ENCODE measurements at regions of chr1 and their contacts with region 1.

Region 1: DNA sequence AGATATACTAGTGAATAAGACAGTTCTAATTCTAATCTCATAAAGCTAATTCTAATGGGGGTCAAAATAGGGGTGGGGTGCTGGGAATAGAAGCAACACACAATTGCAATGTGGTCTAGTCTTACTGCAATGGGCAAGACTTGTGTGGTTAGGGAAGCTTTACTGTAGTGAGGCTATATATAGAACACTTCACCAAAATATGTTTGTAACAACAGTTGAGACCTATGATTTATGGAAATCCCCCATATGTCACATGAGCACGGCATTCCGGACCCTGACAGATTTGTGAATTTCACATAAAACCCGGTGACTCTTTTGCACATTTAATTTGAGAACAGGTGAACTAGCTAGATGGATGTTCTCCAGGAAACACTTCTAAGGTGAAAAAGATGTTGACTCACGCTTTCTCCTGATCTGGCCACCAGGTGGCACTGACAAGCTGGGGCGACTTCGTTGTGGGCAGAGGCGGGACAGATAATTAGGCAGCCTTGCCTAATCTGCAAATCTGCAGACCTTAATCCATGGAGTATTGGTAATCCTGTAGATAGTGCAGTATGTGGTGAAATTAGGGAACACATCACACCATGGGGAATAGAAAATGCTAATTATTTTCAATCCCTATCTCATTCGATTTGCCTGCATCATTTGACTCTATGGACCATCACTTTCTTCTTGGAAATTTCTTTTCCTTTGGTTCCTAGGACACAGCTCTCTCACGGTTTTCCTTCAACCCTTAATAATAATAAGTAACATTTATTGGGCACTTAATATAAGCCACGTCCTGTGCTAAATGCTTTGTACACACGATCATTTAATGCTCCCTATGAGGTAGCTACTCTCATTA is 37.7 kb downstream of the KIAA0040 start:
- DNase-seq: peak; percentile 81
- ATAC-seq: peak; percentile 64
- H3K4me3 ChIP-seq: no peak overlapping the region
- H3K4me3 Mint-ChIP-seq: no peak overlapping the region
- H3K27ac ChIP-seq: no peak overlapping the region
- H3K27ac Mint-ChIP-seq: no peak overlapping the region
- H3K4me1 ChIP-seq: peaks cover 16 to 27% of the 10 kb centered on the region in 2 donors
- H3K4me1 Mint-ChIP-seq: peaks cover 34% of the 10 kb centered on the region
- H3K27me3 ChIP-seq: peaks cover 0 to 16% (median 7%) of the 10 kb centered on the region in 4 experiments
- H3K27me3 Mint-ChIP-seq: peaks cover 18% of the 10 kb centered on the region
- CTCF ChIP-seq: peak; percentile 92

Region 2: GRCh38 chr1:174497478-174497877 is 657.4 kb before region 1 on chr1:
- CTCF ChIA-PET with region 1: no interaction called
- POLR2A ChIA-PET with region 1: no interaction called
- intact Hi-C with region 1: no loop called
- DNase-seq: no peak
- ATAC-seq: no peak
- H3K4me3 ChIP-seq: no peak overlapping the region
- H3K4me3 Mint-ChIP-seq: no peak overlapping the region
- H3K27ac ChIP-seq: no peak overlapping the region
- H3K27ac Mint-ChIP-seq: no peak overlapping the region
- H3K4me1 ChIP-seq: no peaks in the 10 kb centered on the region
- H3K4me1 Mint-ChIP-seq: peaks cover 14% of the 10 kb centered on the region
- H3K27me3 ChIP-seq: no peaks in the 10 kb centered on the region
- H3K27me3 Mint-ChIP-seq: no peaks in the 10 kb centered on the region
- CTCF ChIP-seq: no peak

Region 3: GRCh38 chr1:174850726-174851125 is 304.1 kb before region 1 on chr1:
- CTCF ChIA-PET with region 1: no interaction called
- POLR2A ChIA-PET with region 1: no interaction called
- intact Hi-C with region 1: no loop called
- DNase-seq: no peak
- ATAC-seq: no peak
- H3K4me3 ChIP-seq: no peak overlapping the region
- H3K4me3 Mint-ChIP-seq: no peak overlapping the region
- H3K27ac ChIP-seq: no peak overlapping the region
- H3K27ac Mint-ChIP-seq: no peak overlapping the region
- H3K4me1 ChIP-seq: no peaks in the 10 kb centered on the region
- H3K4me1 Mint-ChIP-seq: no peaks in the 10 kb centered on the region
- H3K27me3 ChIP-seq: no peaks in the 10 kb centered on the region
- H3K27me3 Mint-ChIP-seq: no peaks in the 10 kb centered on the region
- CTCF ChIP-seq: no peak

Region 4: DNA sequence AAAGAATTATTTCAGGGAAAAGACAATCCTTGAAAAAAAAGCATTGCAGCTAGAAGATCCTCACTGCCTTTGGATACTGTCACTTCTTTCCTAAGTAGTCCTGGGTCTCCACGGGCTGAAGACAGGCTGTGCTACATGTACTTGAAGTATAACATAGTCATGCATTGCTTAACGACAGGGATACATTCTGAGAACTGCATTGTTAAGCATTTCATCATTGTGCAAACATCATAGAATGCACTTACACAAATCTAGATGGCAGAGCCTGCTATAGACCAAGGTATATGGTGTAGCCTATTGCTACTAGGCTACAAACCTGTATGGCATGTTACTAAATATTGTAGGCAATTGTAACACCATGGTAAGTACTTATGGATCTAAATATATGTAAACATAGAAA is 16.3 kb before region 1 on chr1:
- CTCF ChIA-PET with region 1: interaction called, 32 read pairs
- POLR2A ChIA-PET with region 1: no interaction called
- intact Hi-C with region 1: no loop called
- DNase-seq: no peak
- ATAC-seq: no peak
- H3K4me3 ChIP-seq: no peak overlapping the region
- H3K4me3 Mint-ChIP-seq: no peak overlapping the region
- H3K27ac ChIP-seq: no peak overlapping the region
- H3K27ac Mint-ChIP-seq: no peak overlapping the region
- H3K4me1 ChIP-seq: peaks cover 0 to 13% of the 10 kb centered on the region in 2 donors
- H3K4me1 Mint-ChIP-seq: peaks cover 15% of the 10 kb centered on the region
- H3K27me3 ChIP-seq: peaks cover 0 to 10% (median 6%) of the 10 kb centered on the region in 4 experiments
- H3K27me3 Mint-ChIP-seq: peaks cover 36% of the 10 kb centered on the region
- CTCF ChIP-seq: no peak

Region 5: DNA sequence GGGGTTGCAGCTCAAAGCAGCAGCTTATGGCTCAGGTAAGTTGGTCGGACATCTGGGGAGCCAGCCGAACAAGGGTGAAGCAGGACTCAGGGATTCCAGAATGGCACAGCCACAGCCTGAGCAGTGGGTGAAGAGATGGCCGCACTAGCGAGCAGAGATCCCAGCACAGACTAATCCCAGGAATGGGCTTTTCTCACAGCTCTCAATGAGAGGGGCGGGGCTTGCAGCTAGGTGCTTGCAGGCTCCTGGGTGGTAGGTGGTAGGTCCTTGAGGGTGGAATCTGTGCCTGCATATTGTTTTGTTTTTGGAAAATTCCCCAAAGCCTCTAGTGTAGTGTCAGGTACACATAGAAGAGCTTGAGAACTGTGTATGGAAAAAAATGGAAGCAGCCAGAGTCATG is 28.7 kb after region 1 on chr1:
- CTCF ChIA-PET with region 1: interaction called, 90 read pairs
- POLR2A ChIA-PET with region 1: no interaction called
- intact Hi-C with region 1: no loop called
- DNase-seq: no peak
- ATAC-seq: no peak
- H3K4me3 ChIP-seq: no peak overlapping the region
- H3K4me3 Mint-ChIP-seq: peak overlapping the region; percentile 46
- H3K27ac ChIP-seq: peak overlapping the region in 1 of 2 donors; percentile 48
- H3K27ac Mint-ChIP-seq: peak overlapping the region; percentile 75
- H3K4me1 ChIP-seq: peaks cover 95 to 100% of the 10 kb centered on the region in 2 donors
- H3K4me1 Mint-ChIP-seq: peaks cover 95% of the 10 kb centered on the region
- H3K27me3 ChIP-seq: no peaks in the 10 kb centered on the region
- H3K27me3 Mint-ChIP-seq: no peaks in the 10 kb centered on the region
- CTCF ChIP-seq: no peak

Region 6: DNA sequence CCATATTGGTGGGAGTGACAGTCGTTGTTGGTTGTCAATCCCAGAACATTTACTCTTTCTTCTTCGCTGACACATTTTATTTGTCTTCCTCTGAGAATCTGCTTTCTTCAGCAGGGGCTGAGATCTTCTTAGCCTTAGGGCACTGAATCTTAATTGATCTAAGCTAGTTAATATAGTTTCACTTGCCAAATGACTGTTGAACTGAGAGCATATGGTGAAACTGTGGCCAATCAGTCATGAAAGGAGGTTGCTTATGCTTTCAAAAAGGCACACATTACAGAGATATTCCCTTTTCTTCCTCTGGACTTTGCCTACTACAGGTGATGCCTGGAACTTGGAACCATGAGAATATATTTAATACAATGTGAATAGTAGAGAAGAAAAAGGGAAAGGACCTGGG is 97.7 kb after region 1 on chr1:
- CTCF ChIA-PET with region 1: interaction called, 10 read pairs
- POLR2A ChIA-PET with region 1: no interaction called
- intact Hi-C with region 1: no loop called
- DNase-seq: no peak
- ATAC-seq: no peak
- H3K4me3 ChIP-seq: no peak overlapping the region
- H3K4me3 Mint-ChIP-seq: no peak overlapping the region
- H3K27ac ChIP-seq: no peak overlapping the region
- H3K27ac Mint-ChIP-seq: no peak overlapping the region
- H3K4me1 ChIP-seq: no peaks in the 10 kb centered on the region
- H3K4me1 Mint-ChIP-seq: peaks cover 9% of the 10 kb centered on the region
- H3K27me3 ChIP-seq: no peaks in the 10 kb centered on the region
- H3K27me3 Mint-ChIP-seq: no peaks in the 10 kb centered on the region
- CTCF ChIP-seq: no peak

Region 7: DNA sequence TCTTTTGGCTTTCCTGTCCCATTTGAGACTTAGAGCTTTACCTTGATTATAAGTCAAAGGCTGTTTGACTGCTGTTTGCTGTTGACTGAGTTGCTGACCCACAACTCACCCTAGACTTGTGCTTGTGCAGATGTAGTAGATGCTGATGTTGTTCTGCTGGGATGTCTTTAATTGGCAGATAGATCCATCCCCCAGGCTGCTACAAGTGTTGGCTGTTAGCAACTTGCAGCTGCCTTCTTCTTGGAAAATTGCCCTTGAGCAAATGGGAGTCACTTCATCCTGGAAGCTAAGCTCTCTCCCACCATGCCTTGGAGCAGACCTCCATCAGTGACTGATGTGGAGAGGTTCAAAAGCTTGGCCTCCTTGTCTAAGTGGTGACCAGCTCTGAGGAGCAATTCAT is 177.0 kb after region 1 on chr1:
- CTCF ChIA-PET with region 1: interaction called, 82 read pairs
- POLR2A ChIA-PET with region 1: no interaction called
- intact Hi-C with region 1: no loop called
- DNase-seq: no peak
- ATAC-seq: no peak
- H3K4me3 ChIP-seq: no peak overlapping the region
- H3K4me3 Mint-ChIP-seq: no peak overlapping the region
- H3K27ac ChIP-seq: no peak overlapping the region
- H3K27ac Mint-ChIP-seq: no peak overlapping the region
- H3K4me1 ChIP-seq: peaks cover 0 to 3% of the 10 kb centered on the region in 2 donors
- H3K4me1 Mint-ChIP-seq: peaks cover 7% of the 10 kb centered on the region
- H3K27me3 ChIP-seq: no peaks in the 10 kb centered on the region
- H3K27me3 Mint-ChIP-seq: no peaks in the 10 kb centered on the region
- CTCF ChIP-seq: no peak

Region 8: DNA sequence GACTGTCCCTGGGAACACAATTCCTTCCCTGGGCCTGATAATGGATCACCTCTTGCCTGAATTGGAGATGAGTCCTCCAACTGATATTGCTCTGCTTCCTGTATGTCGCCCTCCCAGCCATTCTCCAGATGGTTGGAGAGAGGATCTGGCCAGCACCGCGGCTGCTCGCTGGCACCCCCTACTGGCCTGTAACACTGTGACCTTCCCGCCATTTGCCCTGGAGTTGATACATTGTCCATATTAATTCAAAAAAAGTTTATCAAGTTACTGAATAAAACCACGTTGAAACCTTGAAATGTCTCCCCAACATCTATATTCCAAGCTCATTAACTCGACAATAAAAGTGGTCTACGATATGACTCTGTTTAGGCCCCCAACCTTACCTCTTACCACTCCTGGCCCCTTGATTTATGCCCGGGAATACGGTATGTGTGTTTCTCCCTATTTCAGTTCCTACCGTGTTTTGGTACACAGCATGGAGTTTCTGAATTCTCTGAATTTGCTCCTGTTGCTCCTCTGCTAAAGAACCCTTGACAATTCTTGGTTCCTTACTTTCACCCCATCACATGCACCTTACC is 279.5 kb after region 1 on chr1:
- CTCF ChIA-PET with region 1: interaction called, 13 read pairs
- POLR2A ChIA-PET with region 1: no interaction called
- intact Hi-C with region 1: loop called (anchors 1 kb)
- DNase-seq: no peak
- ATAC-seq: no peak
- H3K4me3 ChIP-seq: no peak overlapping the region
- H3K4me3 Mint-ChIP-seq: no peak overlapping the region
- H3K27ac ChIP-seq: no peak overlapping the region
- H3K27ac Mint-ChIP-seq: no peak overlapping the region
- H3K4me1 ChIP-seq: no peaks in the 10 kb centered on the region
- H3K4me1 Mint-ChIP-seq: no peaks in the 10 kb centered on the region
- H3K27me3 ChIP-seq: peaks cover 0 to 4% (median 0%) of the 10 kb centered on the region in 4 experiments
- H3K27me3 Mint-ChIP-seq: peaks cover 34% of the 10 kb centered on the region
- CTCF ChIP-seq: peak; percentile 27

Region 9: GRCh38 chr1:175824079-175824478 is 669.2 kb after region 1 on chr1:
- CTCF ChIA-PET with region 1: interaction called, 14 read pairs
- POLR2A ChIA-PET with region 1: no interaction called
- intact Hi-C with region 1: no loop called
- DNase-seq: peak; percentile 18
- ATAC-seq: no peak
- H3K4me3 ChIP-seq: no peak overlapping the region
- H3K4me3 Mint-ChIP-seq: no peak overlapping the region
- H3K27ac ChIP-seq: no peak overlapping the region
- H3K27ac Mint-ChIP-seq: no peak overlapping the region
- H3K4me1 ChIP-seq: no peaks in the 10 kb centered on the region
- H3K4me1 Mint-ChIP-seq: no peaks in the 10 kb centered on the region
- H3K27me3 ChIP-seq: no peaks in the 10 kb centered on the region
- H3K27me3 Mint-ChIP-seq: peaks cover 24% of the 10 kb centered on the region
- CTCF ChIP-seq: peak; percentile 21

Measured in B cell (primary cell).